ENCODE measurements at regions of chr20 and their contacts with region 1.

Region 1: GRCh38 chr20:18466894-18467730 is at the starts of genes DZANK1 and POLR3F:
- DNase-seq: peak; percentile 83 to 94 (median 89)
- ATAC-seq: peak; percentile 93 to 98 (median 97)
- H3K4me3 ChIP-seq: peak within 1 kb of the TSS; percentile 80 to 93
- H3K4me3 Mint-ChIP-seq: peak within 1 kb of the TSS; percentile 96 to 98 (median 96)
- H3K27ac ChIP-seq: peak within 1 kb of the TSS; percentile 77
- H3K27ac Mint-ChIP-seq: peak within 1 kb of the TSS; percentile 92 to 94
- H3K4me1 ChIP-seq: peaks cover 5 to 19% of the 10 kb centered on the region in 2 experiments
- H3K4me1 Mint-ChIP-seq: peaks cover 26 to 39% (median 30%) of the 10 kb centered on the region in 3 donors
- H3K27me3 ChIP-seq: no peaks in the 10 kb centered on the region
- H3K27me3 Mint-ChIP-seq: no peaks in the 10 kb centered on the region
- total RNA-seq, gene DZANK1: 2.3 to 4.0 (median 3.2) TPM
- total RNA-seq, gene POLR3F: 5.9 to 8.8 (median 8.3) TPM

Region 2: DNA sequence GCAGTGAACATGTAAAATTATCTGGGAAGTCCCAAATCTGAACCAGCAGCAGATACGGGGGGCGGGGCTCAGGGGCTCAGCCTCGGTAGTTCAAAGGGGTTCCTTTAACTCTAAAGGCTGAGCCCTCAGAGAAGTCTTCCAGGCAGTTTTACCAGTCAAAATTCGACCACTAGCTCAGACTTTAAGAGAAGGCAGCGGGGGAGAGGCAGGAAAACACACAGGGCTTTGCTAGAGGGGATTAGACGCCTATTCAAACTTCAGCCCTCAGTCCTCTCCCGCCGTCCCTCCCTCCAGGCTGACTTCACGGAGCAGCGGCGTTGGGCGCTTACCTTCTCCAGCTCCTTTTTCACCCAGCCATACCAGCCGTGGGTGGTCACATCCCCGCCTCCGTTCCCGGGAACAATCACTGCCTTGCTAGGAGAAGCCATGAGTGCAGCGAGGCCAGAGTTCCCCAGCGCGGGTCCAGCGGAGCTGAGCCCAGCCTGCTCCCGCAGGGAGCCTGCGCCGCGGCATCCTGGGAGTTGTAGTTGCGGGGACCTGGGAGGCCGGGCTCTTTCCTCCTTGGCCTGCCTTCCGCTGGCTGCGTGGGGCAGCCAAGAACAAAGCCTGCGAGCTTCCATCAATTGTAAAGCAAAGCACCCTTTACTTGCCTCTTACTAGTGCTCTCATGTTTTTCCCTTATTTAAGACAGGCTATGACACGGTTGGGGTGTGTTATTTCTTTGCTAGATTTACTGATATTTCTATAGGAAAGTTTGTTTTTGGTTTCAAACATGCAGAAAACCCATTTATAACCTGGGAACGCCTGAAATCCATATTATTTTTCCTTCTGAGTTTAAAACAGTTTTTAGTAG is 29.9 kb after region 1 on chr20 and contains the start of gene RBBP9:
- CTCF ChIA-PET with region 1: interaction called in 1 of 2 experiments, 12 read pairs
- POLR2A ChIA-PET with region 1: interaction called, 3 to 6 read pairs
- DNase-seq: peak; percentile 42 to 84 (median 65)
- ATAC-seq: peak; percentile 98 to 100 (median 99)
- H3K4me3 ChIP-seq: peak within 1 kb of the TSS; percentile 91 to 97
- H3K4me3 Mint-ChIP-seq: peak within 1 kb of the TSS; percentile 93 to 97 (median 95)
- H3K27ac ChIP-seq: peak within 1 kb of the TSS; percentile 64
- H3K27ac Mint-ChIP-seq: peak within 1 kb of the TSS; percentile 11 to 91
- H3K4me1 ChIP-seq: peaks cover 10% of the 10 kb centered on the region in 2 experiments
- H3K4me1 Mint-ChIP-seq: peaks cover 11 to 21% (median 19%) of the 10 kb centered on the region in 3 donors
- H3K27me3 ChIP-seq: no peaks in the 10 kb centered on the region
- H3K27me3 Mint-ChIP-seq: peaks cover 0 to 3% of the 10 kb centered on the region in 2 donors
- total RNA-seq, gene RBBP9: 5.9 to 8.4 (median 7.3) TPM

Region 3: GRCh38 chr20:18613556-18613955 is 146.4 kb after region 1 on chr20:
- CTCF ChIA-PET with region 1: no interaction called
- POLR2A ChIA-PET with region 1: no interaction called
- DNase-seq: no peak
- ATAC-seq: no peak
- H3K4me3 ChIP-seq: no peak overlapping the region
- H3K4me3 Mint-ChIP-seq: no peak overlapping the region
- H3K27ac ChIP-seq: no peak overlapping the region
- H3K27ac Mint-ChIP-seq: no peak overlapping the region
- H3K4me1 ChIP-seq: no peaks in the 10 kb centered on the region
- H3K4me1 Mint-ChIP-seq: peaks cover 0 to 6% (median 6%) of the 10 kb centered on the region in 3 donors
- H3K27me3 ChIP-seq: no peaks in the 10 kb centered on the region
- H3K27me3 Mint-ChIP-seq: no peaks in the 10 kb centered on the region

Measured in T-cell (primary cell).